Heart right ventricle (tissue), 16 donors: ENCODE measurements at regions of chr9 and their contacts with region 1.

Region 1: DNA sequence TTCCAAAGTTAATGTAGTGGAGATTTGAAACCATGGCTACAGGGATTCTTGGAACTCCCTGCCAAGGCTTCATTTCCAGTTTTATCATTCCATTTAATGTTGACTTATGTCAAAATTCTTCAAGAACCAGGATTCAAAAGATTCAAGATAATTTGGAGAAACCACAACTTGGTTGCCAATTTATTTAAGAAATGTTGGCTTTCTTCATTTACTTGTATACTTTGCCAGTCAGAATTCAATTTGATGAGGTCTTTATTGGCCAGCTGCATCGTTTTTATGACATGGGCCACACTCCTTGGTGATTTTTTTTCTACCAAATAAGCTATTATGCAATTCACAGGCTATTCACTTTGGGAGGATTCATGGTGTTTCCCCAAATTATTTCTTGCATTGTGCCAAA is 53.1 kb upstream of the RASEF start:
- DNase-seq: no peak
- ATAC-seq: no peak
- H3K4me3 ChIP-seq: no peak overlapping the region
- H3K27ac ChIP-seq: no peak overlapping the region
- H3K4me1 ChIP-seq: no peaks in the 10 kb centered on the region
- H3K27me3 ChIP-seq: no peaks in the 10 kb centered on the region
- CTCF ChIP-seq: no peak

Region 2: DNA sequence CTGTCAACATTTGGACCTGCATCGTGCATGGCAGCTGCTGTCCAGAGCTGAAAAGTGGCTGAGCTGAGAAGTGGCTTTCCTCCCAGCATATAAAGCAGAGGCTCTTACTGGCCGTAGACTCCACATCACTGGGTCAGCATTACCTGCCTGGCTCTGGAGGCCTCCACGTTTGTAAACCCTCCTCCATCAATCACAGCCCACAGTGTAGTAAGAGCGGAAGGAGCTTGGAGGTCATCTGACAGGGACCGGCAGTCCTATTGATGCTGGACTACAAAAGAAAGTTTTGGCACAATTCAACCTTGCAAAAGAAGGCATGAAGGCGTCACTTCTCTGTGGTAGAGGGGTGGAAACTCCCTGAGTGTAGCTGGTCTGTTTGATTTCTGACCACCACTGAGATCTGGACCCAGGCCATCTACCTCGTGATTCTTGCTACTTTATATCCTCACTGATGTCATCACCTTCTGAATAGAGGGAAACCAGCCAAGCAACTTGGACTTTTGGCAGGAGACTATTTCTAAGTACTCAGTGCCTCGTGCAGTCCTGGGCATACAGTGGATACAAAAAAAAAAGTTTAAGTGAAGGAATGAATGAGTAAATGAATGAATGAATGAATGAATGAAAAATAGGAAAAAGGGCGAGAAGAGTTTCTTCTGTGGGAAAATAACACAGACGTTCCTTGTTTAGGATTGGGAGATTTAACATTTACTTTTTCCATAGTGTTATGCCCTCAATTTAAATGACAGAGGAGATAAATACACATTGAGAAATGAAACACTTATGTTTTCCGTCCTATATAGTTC is 67.9 kb before region 1 on chr9:
- intact Hi-C with region 1: no loop called
- DNase-seq: peak in 1 of 2 donors; percentile 60
- ATAC-seq: peak in 7 of 8 donors; percentile 68 to 92 (median 76)
- H3K4me3 ChIP-seq: no peak overlapping the region
- H3K27ac ChIP-seq: no peak overlapping the region
- H3K4me1 ChIP-seq: peaks cover 0 to 10% (median 0%) of the 10 kb centered on the region in 9 donors
- H3K27me3 ChIP-seq: no peaks in the 10 kb centered on the region
- CTCF ChIP-seq: no peak

Region 3: DNA sequence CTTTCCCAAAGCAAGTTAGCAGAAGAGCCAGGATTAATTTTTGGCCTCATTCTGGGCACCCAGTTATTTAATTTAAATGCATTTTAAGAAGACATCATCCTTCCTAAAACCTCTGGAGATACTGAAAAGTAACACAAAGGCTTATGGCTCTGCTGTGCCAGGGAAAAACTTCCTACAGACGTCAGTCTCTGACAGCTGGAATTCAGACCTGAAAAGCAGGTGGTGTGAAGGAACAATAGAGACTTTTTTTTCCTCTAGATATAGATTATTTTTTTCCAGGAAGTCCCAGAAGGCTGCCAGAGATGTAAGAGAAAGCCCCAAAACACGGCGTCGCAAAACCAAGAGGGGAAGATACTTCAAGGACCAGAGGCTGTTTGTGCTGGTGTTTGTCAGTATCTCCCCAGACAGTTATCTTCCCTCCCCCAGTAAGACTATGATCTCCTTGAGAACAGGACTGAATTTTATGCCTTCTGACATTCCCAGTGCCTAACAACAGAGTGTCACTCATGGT is 35.7 kb after region 1 on chr9:
- intact Hi-C with region 1: loop called in 1 of 10 experiments (anchors 1 kb)
- DNase-seq: no peak
- ATAC-seq: no peak
- H3K4me3 ChIP-seq: no peak overlapping the region
- H3K27ac ChIP-seq: no peak overlapping the region
- H3K4me1 ChIP-seq: no peaks in the 10 kb centered on the region
- H3K27me3 ChIP-seq: peaks cover 0 to 4% (median 0%) of the 10 kb centered on the region in 7 donors
- CTCF ChIP-seq: no peak

Region 4: GRCh38 chr9:83188277-83188676 is 72.3 kb after region 1 on chr9:
- intact Hi-C with region 1: no loop called
- DNase-seq: no peak
- ATAC-seq: no peak
- H3K4me3 ChIP-seq: no peak overlapping the region
- H3K27ac ChIP-seq: no peak overlapping the region
- H3K4me1 ChIP-seq: peaks cover 0 to 12% (median 0%) of the 10 kb centered on the region in 9 donors
- H3K27me3 ChIP-seq: peaks cover 0 to 15% (median 3%) of the 10 kb centered on the region in 7 donors
- CTCF ChIP-seq: no peak